ENCODE measurements at regions of chr17 and their contacts with region 1.

Region 1: GRCh38 chr17:16415031-16415924 is at the start of gene TRPV2:
- DNase-seq: peak; percentile 75
- ATAC-seq: peak; percentile 52
- H3K4me3 Mint-ChIP-seq: peak within 1 kb of the TSS; percentile 99
- H3K27ac Mint-ChIP-seq: peak within 1 kb of the TSS; percentile 99
- H3K4me1 Mint-ChIP-seq: peaks cover 36% of the 10 kb centered on the region
- H3K27me3 Mint-ChIP-seq: no peaks in the 10 kb centered on the region
- total RNA-seq, gene TRPV2: 97.0 to 107 TPM

Region 2: DNA sequence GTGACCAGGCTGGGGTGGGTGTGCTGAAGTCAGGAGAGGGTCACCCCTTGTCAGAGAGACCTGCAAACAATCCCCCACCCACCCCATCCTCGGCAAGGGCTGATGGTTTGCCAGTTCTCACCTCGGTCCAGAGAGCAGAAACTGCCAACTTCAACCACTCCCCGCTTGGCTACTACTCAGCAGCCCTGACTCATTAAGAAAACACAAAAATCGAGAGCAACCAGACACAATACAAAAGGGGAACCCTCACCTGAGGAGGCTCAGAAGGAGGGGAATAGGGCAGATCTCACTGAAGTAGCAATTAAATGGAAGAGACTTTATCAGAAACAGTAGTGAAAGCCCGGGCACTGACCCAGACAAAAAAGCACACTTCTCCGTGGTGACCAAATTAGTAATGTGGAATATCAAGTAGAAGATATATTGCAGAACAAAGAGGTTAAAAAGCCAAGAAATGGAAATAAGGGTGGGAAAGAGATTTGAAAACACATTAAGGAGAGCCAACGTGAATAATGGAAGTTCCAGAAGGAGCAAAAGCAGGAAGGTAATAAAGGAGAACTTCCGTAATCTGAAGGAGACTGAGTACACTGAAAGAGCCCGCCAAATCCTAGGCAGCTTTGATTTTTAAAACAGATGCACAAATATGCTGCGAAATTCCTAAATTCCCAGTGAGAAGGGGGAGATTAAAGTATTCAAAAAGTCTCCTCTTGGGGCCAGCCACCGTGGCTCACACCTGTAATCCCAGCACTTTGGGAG is 85.6 kb before region 1 on chr17:
- POLR2A ChIA-PET with region 1: no interaction called
- DNase-seq: no peak
- ATAC-seq: no peak
- H3K4me3 Mint-ChIP-seq: no peak overlapping the region
- H3K27ac Mint-ChIP-seq: no peak overlapping the region
- H3K4me1 Mint-ChIP-seq: no peaks in the 10 kb centered on the region
- H3K27me3 Mint-ChIP-seq: no peaks in the 10 kb centered on the region

Region 3: DNA sequence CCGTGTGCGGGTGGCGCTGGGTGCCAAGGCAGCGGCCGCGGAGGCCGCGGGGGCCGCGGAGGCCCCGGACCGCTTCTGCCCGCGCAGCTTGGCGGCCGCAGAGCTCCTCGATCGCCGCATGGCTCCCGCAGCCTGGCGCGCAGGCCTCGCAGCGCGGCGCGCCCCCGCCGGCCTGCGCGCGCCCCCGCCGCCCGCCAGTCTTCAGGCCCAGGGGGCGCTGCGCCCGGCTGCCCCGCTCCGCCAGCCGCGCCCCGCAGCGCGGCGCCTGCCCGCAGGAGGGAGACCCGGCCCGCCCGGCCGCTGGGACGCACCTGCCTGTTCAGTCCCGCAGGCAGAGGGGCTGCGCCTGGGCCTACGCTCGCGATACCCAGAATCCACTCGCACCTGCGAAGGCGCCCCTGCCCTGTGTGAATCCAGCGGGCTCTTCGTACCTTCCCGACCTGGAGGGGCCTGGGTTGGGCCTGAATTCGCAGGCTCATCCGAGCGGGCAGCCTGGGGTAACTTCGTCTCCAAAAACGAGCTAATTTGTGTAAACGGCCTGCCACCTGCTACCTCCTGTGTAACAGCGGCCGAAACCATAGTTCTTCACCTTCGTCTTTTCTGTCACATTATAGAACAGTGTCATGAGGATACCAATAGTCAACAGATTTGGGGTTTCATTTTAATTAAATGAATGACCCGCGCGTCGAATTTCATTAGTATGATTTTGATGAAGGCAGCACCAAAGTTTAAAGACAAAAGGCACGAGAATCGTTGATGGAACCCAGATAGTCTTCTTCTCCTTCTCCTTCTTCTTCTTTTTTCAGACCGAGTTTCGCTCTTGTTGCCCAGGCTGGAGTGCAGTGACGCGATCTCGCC is 61.7 kb before region 1 on chr17 and contains the start of gene CENPV:
- POLR2A ChIA-PET with region 1: interaction called, 14 read pairs
- DNase-seq: peak; percentile 83
- ATAC-seq: peak; percentile 83
- H3K4me3 Mint-ChIP-seq: peak within 1 kb of the TSS; percentile 94
- H3K27ac Mint-ChIP-seq: peak within 1 kb of the TSS; percentile 75
- H3K4me1 Mint-ChIP-seq: peaks cover 23% of the 10 kb centered on the region
- H3K27me3 Mint-ChIP-seq: peaks cover 6% of the 10 kb centered on the region
- total RNA-seq, gene CENPV: 18.6 to 19.7 TPM

Region 4: GRCh38 chr17:16363749-16364536 is 51.3 kb before region 1 on chr17:
- POLR2A ChIA-PET with region 1: interaction called, 14 read pairs
- DNase-seq: peak; percentile 71
- ATAC-seq: peak; percentile 94
- H3K4me3 Mint-ChIP-seq: no peak overlapping the region
- H3K27ac Mint-ChIP-seq: no peak overlapping the region
- H3K4me1 Mint-ChIP-seq: no peaks in the 10 kb centered on the region
- H3K27me3 Mint-ChIP-seq: no peaks in the 10 kb centered on the region

Region 5: DNA sequence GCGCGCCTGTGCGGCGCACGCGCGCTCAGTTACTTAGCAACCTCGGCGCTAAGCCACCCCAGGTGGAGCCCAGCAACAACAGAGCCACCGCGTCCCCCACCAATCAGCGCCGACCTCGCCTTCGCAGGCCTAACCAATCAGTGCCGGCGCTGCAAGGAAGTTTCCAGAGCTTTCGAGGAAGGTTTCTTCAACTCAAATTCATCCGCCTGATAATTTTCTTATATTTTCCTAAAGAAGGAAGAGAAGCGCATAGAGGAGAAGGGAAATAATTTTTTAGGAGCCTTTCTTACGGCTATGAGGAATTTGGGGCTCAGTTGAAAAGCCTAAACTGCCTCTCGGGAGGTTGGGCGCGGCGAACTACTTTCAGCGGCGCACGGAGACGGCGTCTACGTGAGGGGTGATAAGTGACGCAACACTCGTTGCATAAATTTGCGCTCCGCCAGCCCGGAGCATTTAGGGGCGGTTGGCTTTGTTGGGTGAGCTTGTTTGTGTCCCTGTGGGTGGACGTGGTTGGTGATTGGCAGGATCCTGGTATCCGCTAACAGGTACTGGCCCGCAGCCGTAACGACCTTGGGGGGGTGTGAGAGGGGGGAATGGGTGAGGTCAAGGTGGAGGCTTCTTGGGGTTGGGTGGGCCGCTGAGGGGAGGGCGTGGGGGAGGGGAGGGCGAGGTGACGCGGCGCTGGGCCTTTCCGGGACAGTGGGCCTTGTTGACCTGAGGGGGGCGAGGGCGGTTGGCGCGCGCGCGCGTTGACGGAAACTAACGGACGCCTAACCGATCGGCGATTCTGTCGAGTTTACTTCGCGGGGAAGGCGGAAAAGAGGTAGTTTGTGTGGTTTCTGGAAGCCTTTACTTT is 34.4 kb before region 1 on chr17 and contains the start of gene UBB:
- POLR2A ChIA-PET with region 1: interaction called, 59 read pairs
- DNase-seq: peak; percentile 89
- ATAC-seq: peak; percentile 96
- H3K4me3 Mint-ChIP-seq: peak within 1 kb of the TSS; percentile 96
- H3K27ac Mint-ChIP-seq: peak within 1 kb of the TSS; percentile 93
- H3K4me1 Mint-ChIP-seq: peaks cover 24% of the 10 kb centered on the region
- H3K27me3 Mint-ChIP-seq: no peaks in the 10 kb centered on the region
- total RNA-seq, gene UBB: 1,069 to 1,087 TPM

Region 6: DNA sequence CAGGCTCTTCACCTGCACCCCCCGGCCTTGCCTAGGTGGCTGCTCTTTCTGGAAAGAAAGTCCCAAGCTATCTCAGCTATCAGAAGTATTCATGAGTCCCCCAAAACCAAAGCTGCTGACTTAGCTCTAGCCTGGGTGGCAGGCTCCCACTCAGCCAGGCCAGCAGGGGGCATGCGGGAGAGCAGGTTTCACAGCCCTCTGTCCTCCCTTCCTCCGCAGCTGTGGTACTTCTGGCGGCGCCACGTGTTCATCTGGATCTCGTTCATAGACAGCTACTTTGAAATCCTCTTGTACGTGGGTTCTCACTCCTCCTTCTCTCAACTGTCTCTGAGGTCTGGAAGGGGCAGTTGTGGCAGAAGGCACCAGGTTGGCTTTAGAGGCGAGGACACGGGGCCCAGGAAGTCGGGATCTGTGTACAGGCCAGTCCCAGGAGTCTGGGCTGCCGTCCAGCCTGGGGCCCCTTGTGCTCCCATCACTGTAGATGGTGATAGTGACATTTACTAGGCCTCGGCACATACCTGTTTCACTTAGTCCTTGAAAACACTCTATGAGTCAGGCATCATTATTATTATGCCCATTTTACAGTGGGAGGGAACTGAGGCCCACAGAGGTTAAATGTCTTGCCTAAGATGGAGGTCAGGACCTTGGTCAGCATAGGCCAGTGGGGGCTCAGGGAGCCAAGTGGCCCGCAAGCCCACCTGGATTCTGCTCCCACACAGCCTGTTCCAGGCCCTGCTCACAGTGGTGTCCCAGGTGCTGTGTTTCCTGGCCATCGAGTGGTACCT is 13.0 kb after region 1 on chr17:
- POLR2A ChIA-PET with region 1: interaction called, 12 read pairs
- DNase-seq: peak; percentile 58
- ATAC-seq: peak; percentile 70
- H3K4me3 Mint-ChIP-seq: no peak overlapping the region
- H3K27ac Mint-ChIP-seq: no peak overlapping the region
- H3K4me1 Mint-ChIP-seq: peaks cover 4% of the 10 kb centered on the region
- H3K27me3 Mint-ChIP-seq: no peaks in the 10 kb centered on the region

Region 7: DNA sequence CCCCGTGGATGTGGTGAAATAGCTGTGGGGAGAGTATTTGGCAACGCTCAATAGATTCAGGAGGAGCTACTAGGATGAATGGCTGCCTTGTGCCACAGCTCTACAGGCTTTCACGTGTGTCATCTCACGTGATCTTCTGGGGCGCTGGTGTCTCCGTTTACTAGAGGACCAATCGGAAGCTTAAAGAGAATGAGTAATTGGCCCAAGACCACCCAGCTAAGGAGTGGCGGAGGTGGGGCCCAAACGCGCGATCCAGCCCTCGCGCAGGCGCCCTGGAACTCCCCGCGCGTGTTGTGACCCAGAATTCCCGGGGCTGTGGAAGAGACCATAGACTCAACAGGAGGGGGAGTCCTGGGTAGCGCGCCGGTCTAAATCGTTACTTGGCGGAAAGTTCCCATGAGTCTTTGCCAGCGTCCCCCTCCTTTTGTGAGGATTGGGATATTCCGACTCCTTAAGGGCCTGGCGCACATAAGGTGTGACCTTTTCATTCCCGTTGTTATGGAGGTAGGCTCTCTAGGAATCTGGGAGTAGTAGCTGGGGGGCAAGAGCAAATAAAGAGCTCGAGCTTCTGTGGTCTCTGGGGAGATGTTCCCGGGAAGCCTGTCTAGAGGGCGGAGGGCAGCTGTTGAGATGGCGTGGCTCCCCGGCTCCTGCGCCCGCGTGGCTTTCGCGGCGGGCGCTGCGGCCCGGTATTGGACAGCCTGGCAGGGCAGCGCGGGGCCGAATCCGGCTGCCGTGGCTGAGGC is 23.5 kb after region 1 on chr17:
- POLR2A ChIA-PET with region 1: interaction called, 69 read pairs
- DNase-seq: peak; percentile 91
- ATAC-seq: peak; percentile 91
- H3K4me3 Mint-ChIP-seq: peak overlapping the region; percentile 99
- H3K27ac Mint-ChIP-seq: peak overlapping the region; percentile 98
- H3K4me1 Mint-ChIP-seq: peaks cover 39% of the 10 kb centered on the region
- H3K27me3 Mint-ChIP-seq: no peaks in the 10 kb centered on the region

Region 8: DNA sequence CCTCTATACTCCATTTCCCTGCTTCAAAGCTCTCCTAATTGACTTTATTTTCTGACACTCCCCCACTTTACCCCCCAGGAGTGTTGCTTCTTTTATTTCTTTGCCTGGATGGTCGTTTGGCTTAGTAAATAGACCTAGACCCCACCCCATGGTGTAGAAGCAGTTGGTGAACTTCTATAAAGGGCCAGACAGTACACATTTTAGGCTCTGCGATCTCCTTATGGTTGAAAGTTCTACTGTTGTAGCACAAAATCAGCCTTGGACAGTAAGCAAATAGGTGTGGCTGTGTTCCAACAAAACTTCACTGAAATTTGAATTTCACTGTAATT is 121.8 kb after region 1 on chr17:
- POLR2A ChIA-PET with region 1: interaction called, 12 read pairs
- DNase-seq: no peak
- ATAC-seq: no peak
- H3K4me3 Mint-ChIP-seq: peak overlapping the region; percentile 98
- H3K27ac Mint-ChIP-seq: peak overlapping the region; percentile 13
- H3K4me1 Mint-ChIP-seq: peaks cover 11% of the 10 kb centered on the region
- H3K27me3 Mint-ChIP-seq: no peaks in the 10 kb centered on the region

Measured in activated naive CD8-positive, alpha-beta T cell treated with anti-CD3 and anti-CD28 coated beads, Interleukin-2, amount 10 ng/mL, durations not matched to agents 7 days and 5 days (primary cell).